Activated naive CD4-positive, alpha-beta T cell treated with anti-CD3 and anti-CD28 coated beads for 36 hours (primary cell): ENCODE measurements at regions of chr1 and their contacts with region 1.

Region 1: GRCh38 chr1:230167419-230167852 is 100.4 kb downstream of the GALNT2 start:
- DNase-seq: peak; percentile 58
- H3K4me3 Mint-ChIP-seq: no peak overlapping the region
- H3K27ac Mint-ChIP-seq: peak overlapping the region; percentile 50
- H3K4me1 Mint-ChIP-seq: peaks cover 55% of the 10 kb centered on the region
- H3K27me3 Mint-ChIP-seq: no peaks in the 10 kb centered on the region

Region 2: DNA sequence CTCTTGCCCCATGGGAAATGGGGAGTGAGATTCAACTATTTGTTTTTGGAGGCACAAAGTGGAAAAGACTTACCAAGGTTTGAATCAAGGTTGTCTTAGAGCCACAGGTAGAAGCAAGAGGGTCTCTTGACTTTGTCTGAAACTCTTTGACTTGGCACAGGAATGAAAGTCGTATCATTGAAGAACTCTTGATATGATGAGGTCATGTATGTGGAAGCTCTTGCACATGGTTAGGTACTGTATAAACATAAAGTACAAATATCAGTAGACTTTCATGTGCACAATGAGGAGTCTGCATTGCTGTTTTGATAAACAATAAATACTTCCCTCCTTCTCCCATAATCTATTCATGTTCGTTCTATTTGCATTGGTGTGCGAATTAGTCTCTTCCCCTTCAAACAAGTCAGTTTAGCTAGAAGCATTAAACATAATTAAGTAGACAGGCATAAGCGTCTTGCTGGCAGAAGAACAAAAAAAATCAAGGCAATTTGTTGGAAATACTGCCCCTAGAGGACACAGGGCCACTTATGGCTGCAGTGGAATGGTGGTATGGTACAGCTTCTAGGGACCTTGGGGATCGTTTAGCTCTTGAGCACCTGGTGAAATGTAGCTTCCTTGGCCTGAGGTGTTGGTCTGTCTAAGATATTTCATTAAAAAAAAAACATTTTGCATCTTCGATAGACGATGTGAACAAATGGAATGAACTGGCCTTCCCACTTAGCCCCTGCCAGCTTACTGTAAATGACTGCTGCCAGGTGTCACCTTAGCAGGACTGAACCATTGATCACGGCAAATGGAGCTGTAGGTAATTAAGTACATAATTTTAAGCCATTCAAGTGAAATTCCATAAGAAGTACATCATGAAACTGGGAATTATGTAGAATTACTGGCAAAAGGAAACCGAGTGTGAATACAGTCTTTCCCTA is 318.4 kb before region 1 on chr1:
- CTCF ChIA-PET with region 1: interaction called, 4 read pairs
- intact Hi-C with region 1: loop called (anchors 10 kb)
- DNase-seq: peak; percentile 21
- H3K4me3 Mint-ChIP-seq: no peak overlapping the region
- H3K27ac Mint-ChIP-seq: no peak overlapping the region
- H3K4me1 Mint-ChIP-seq: no peaks in the 10 kb centered on the region
- H3K27me3 Mint-ChIP-seq: peaks cover 3% of the 10 kb centered on the region

Region 3: GRCh38 chr1:230066466-230067404 is 100.7 kb before region 1 on chr1 and contains the start of gene GALNT2:
- CTCF ChIA-PET with region 1: no interaction called
- intact Hi-C with region 1: loop called (anchors 2 kb)
- DNase-seq: peak; percentile 89
- H3K4me3 Mint-ChIP-seq: peak within 1 kb of the TSS; percentile 88
- H3K27ac Mint-ChIP-seq: peak within 1 kb of the TSS; percentile 83
- H3K4me1 Mint-ChIP-seq: peaks cover 44% of the 10 kb centered on the region
- H3K27me3 Mint-ChIP-seq: no peaks in the 10 kb centered on the region
- total RNA-seq, gene GALNT2: 59.8 to 62.4 TPM

Region 4: GRCh38 chr1:230123280-230124185 is 43.9 kb before region 1 on chr1:
- CTCF ChIA-PET with region 1: interaction called, 3 read pairs
- intact Hi-C with region 1: loop called (anchors 2 kb)
- DNase-seq: peak; percentile 63
- H3K4me3 Mint-ChIP-seq: no peak overlapping the region
- H3K27ac Mint-ChIP-seq: no peak overlapping the region
- H3K4me1 Mint-ChIP-seq: peaks cover 73% of the 10 kb centered on the region
- H3K27me3 Mint-ChIP-seq: no peaks in the 10 kb centered on the region

Region 5: GRCh38 chr1:230310381-230311163 is 143.1 kb after region 1 on chr1:
- CTCF ChIA-PET with region 1: no interaction called
- intact Hi-C with region 1: loop called (anchors 5 kb)
- DNase-seq: peak; percentile 75
- H3K4me3 Mint-ChIP-seq: no peak overlapping the region
- H3K27ac Mint-ChIP-seq: no peak overlapping the region
- H3K4me1 Mint-ChIP-seq: peaks cover 10% of the 10 kb centered on the region
- H3K27me3 Mint-ChIP-seq: peaks cover 4% of the 10 kb centered on the region

Region 6: DNA sequence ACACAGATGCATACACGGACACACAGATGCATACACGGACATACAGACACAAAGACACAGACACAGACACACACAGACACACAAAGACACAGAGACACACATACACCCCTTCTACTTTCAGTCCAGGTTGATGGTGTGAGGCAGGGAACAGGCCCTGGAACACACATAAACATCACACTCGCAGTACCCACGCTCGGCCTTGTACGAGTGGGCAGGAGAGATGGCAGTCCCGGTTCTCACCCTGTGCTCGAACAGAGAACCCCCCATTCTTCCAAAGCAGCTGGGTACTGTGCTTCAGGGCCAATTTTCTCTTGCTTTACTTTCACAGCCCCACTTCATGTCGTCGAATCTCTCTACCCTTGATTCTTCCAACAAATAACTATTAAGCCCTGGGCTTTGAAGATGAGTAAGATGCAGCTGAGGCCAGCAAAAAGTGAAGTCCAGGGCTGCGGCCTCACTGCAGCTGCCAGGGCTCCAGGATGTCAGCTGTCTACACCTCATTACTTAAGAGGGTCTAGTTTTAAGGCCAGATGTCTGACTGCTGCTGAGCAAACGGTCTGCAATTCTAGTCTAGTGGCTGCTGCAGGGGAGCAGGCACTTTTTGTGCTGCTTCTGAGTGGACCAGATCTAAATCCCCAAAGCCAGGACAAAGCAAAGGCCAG is 168.6 kb after region 1 on chr1:
- CTCF ChIA-PET with region 1: no interaction called
- intact Hi-C with region 1: no loop called
- DNase-seq: no peak
- H3K4me3 Mint-ChIP-seq: no peak overlapping the region
- H3K27ac Mint-ChIP-seq: no peak overlapping the region
- H3K4me1 Mint-ChIP-seq: no peaks in the 10 kb centered on the region
- H3K27me3 Mint-ChIP-seq: peaks cover 2% of the 10 kb centered on the region